Psoas muscle (tissue), 8 donors: ENCODE measurements at regions of chr20 and their contacts with region 1.

Region 1: GRCh38 chr20:7285918-7286556 is 518.6 kb downstream of the BMP2 start:
- DNase-seq: peak; percentile 62 to 75
- ATAC-seq: peak; percentile 57 to 84 (median 70)
- H3K4me3 ChIP-seq: no peak overlapping the region
- H3K27ac ChIP-seq: no peak overlapping the region
- H3K4me1 ChIP-seq: no peaks in the 10 kb centered on the region
- H3K27me3 ChIP-seq: no peaks in the 10 kb centered on the region
- CTCF ChIP-seq: peak; percentile 77

Region 2: GRCh38 chr20:6142348-6142993 is 1143.6 kb before region 1 on chr20:
- intact Hi-C with region 1: loop called (anchors 10 kb)
- DNase-seq: no peak
- ATAC-seq: peak in 3 of 4 donors; percentile 60 to 72 (median 71)
- H3K4me3 ChIP-seq: no peak overlapping the region
- H3K27ac ChIP-seq: no peak overlapping the region
- H3K4me1 ChIP-seq: no peaks in the 10 kb centered on the region
- H3K27me3 ChIP-seq: no peaks in the 10 kb centered on the region
- CTCF ChIP-seq: peak; percentile 88

Region 3: DNA sequence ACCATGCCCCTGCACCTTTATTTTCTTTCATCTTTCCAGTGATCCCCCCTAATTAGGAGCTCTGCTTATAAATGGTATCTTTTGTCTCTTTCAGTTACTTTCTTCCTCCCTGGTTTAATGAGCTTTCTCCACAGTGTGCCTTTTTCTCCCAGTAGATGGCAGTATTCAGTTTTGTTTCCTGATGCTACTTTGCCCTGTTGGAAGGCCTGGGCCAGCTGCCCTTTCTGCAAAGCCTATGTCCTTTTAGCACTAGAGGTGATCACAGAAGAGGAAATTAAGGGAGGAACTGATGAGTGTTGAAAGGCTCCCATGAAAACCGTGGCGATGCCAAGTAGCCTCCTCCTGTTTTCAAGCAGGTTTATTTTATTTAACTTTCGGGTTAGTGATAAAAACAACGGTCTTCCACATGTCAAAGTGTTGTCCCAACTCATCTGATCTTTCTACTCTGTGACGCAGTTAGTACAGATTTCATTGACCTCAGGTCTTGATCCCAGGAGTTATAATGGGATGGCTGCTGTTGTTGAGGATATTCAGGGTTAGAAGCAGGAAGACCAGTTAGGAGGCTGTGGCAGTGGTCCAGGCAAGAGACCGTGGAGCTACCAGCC is 702.8 kb before region 1 on chr20:
- intact Hi-C with region 1: loop called in 1 of 2 experiments (anchors 10 kb)
- DNase-seq: peak; percentile 31 to 48
- ATAC-seq: peak in 1 of 4 donors; percentile 56
- H3K4me3 ChIP-seq: no peak overlapping the region
- H3K27ac ChIP-seq: no peak overlapping the region
- H3K4me1 ChIP-seq: no peaks in the 10 kb centered on the region
- H3K27me3 ChIP-seq: no peaks in the 10 kb centered on the region
- CTCF ChIP-seq: peak; percentile 46

Region 4: GRCh38 chr20:6767536-6768227 is 518.4 kb before region 1 on chr20 and contains the start of gene BMP2:
- intact Hi-C with region 1: loop called in 1 of 2 experiments (anchors 10 kb)
- DNase-seq: peak; percentile 60 to 74
- ATAC-seq: peak; percentile 72 to 80 (median 76)
- H3K4me3 ChIP-seq: peak within 1 kb of the TSS; percentile 77
- H3K27ac ChIP-seq: peak within 1 kb of the TSS; percentile 48
- H3K4me1 ChIP-seq: no peaks in the 10 kb centered on the region
- H3K27me3 ChIP-seq: peaks cover 0 to 14% (median 3%) of the 10 kb centered on the region in 3 donors
- CTCF ChIP-seq: no peak
- total RNA-seq, gene BMP2: 0.75 to 2.9 (median 1.6) TPM

Region 5: DNA sequence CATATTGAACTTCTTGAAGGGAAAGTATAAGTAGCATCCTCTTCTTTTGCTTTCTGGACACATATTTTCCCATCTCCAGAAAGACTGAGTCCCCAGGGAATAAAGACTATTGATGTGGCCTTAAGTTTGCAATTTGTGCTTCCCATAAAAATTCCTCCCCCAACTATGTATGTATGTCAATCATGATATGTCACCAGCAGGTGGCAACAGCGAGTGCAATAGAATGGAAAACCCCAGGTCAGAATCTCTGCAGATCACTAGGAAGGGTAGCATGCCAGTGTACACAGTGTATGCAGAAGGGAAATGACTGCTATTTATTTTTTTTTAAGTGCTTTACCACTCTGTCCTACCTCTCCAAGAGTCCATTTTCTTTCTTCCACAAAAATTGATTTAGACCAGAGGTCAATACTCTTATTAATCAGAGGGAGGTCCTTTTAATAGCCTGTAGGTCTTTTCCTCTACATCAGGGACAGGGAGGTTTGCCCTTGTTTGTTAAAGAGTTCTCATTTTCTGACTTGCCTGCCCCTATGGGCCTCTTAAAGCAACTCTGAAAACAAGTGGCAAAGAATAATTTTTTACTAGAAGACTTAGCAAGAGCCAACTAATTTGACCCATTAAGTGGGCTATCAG is 457.1 kb before region 1 on chr20:
- intact Hi-C with region 1: loop called in 1 of 2 experiments (anchors 5 kb)
- DNase-seq: peak; percentile 50 to 55
- ATAC-seq: peak in 3 of 4 donors; percentile 56 to 72 (median 58)
- H3K4me3 ChIP-seq: no peak overlapping the region
- H3K27ac ChIP-seq: no peak overlapping the region
- H3K4me1 ChIP-seq: no peaks in the 10 kb centered on the region
- H3K27me3 ChIP-seq: no peaks in the 10 kb centered on the region
- CTCF ChIP-seq: peak; percentile 68

Region 6: DNA sequence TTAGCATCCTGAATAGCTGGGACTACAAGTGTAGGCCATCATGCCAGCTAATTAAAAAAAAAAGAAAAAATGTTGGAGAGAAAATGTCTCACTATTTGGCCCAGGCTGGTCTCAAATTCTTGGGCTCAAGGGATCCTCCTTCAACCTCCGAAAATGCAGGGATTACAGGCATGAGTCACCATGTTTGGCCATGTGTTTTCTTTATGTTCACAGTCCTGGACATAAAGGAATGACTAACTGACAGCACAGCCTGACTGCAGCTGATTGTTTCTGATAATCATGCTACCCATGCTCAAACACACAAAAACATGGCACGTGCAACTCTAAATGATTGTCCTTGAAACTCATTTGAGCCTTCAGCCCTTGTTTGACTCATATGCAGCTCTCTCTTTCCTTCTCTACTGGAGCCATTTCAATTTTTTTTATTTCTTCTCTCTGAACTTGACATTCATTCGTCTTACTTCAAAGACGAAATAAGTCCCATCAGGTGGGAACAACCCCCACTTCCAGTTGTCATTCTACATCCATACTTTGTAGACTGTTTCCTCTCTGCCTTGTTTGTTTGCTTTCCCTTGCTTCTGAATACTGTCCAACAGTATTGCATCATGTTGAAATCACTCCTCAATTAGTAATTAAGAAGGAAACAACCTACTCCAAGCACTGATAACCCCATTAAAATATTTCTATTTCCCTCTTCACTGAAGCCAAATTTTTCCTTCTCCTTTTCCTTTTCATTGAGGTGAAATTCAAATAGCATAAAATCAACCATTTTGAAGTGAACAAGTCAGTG is 105.6 kb before region 1 on chr20:
- intact Hi-C with region 1: no loop called
- DNase-seq: no peak
- ATAC-seq: no peak
- H3K4me3 ChIP-seq: no peak overlapping the region
- H3K27ac ChIP-seq: no peak overlapping the region
- H3K4me1 ChIP-seq: no peaks in the 10 kb centered on the region
- H3K27me3 ChIP-seq: no peaks in the 10 kb centered on the region
- CTCF ChIP-seq: no peak